ENCODE measurements at regions of chr11 and their contacts with region 1.

Region 1: DNA sequence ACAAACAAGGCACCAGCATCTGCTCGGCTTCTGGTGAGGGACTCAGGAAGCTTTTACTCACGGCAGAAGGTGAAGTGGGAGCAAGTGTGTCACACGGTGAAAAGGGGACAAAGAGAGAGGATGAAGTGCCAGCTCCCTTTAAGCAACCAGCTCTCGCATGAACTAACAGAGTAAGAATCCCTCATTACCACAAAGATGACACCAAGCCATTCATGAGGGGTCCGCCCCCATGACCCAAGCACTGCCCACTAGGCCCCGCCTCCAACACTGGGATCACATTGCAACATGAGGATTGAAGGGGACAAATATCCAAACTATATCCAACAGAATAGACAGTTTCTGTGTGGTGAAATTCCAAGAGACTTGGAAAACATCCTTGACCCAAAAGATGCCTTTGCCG is 198.2 kb upstream of the POU2AF2 start:
- DNase-seq: no peak
- ATAC-seq: no peak
- H3K4me3 ChIP-seq: no peak overlapping the region
- H3K4me3 Mint-ChIP-seq: no peak overlapping the region
- H3K27ac ChIP-seq: no peak overlapping the region
- H3K27ac Mint-ChIP-seq: no peak overlapping the region
- H3K4me1 ChIP-seq: no peaks in the 10 kb centered on the region
- H3K4me1 Mint-ChIP-seq: no peaks in the 10 kb centered on the region
- H3K27me3 ChIP-seq: no peaks in the 10 kb centered on the region
- H3K27me3 Mint-ChIP-seq: peaks cover 3% of the 10 kb centered on the region
- CTCF ChIP-seq: no peak

Region 2: DNA sequence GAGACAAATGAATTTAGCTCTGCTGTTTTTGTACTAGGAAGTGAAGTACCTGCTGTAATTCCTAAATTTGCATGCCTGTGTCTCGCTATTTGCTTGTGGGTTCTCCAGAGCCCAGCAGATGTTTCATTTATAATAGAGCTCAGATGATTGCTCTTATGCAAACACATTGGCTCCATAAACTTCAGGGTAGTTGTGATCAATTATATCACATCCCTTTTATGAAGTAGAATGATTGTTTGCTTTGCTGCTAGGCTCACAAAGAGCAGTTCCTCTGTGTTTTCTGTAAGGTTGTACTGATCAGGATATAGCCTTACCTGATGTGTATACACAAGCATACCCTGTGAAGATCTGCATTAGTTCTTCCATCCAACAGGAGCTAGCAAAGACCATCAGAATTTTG is 1561.2 kb before region 1 on chr11:
- CTCF ChIA-PET with region 1: no interaction called
- POLR2A ChIA-PET with region 1: no interaction called
- intact Hi-C with region 1: loop called in 1 of 2 experiments (anchors 10 kb)
- DNase-seq: no peak
- ATAC-seq: no peak
- H3K4me3 ChIP-seq: no peak overlapping the region
- H3K4me3 Mint-ChIP-seq: no peak overlapping the region
- H3K27ac ChIP-seq: no peak overlapping the region
- H3K27ac Mint-ChIP-seq: no peak overlapping the region
- H3K4me1 ChIP-seq: no peaks in the 10 kb centered on the region
- H3K4me1 Mint-ChIP-seq: no peaks in the 10 kb centered on the region
- H3K27me3 ChIP-seq: no peaks in the 10 kb centered on the region
- H3K27me3 Mint-ChIP-seq: no peaks in the 10 kb centered on the region
- CTCF ChIP-seq: no peak

Region 3: GRCh38 chr11:110991661-110992355 is 55.6 kb before region 1 on chr11:
- CTCF ChIA-PET with region 1: no interaction called
- POLR2A ChIA-PET with region 1: no interaction called
- intact Hi-C with region 1: no loop called
- DNase-seq: no peak
- ATAC-seq: no peak
- H3K4me3 ChIP-seq: no peak overlapping the region
- H3K4me3 Mint-ChIP-seq: no peak overlapping the region
- H3K27ac ChIP-seq: no peak overlapping the region
- H3K27ac Mint-ChIP-seq: no peak overlapping the region
- H3K4me1 ChIP-seq: no peaks in the 10 kb centered on the region
- H3K4me1 Mint-ChIP-seq: no peaks in the 10 kb centered on the region
- H3K27me3 ChIP-seq: no peaks in the 10 kb centered on the region
- H3K27me3 Mint-ChIP-seq: no peaks in the 10 kb centered on the region
- CTCF ChIP-seq: no peak

Region 4: DNA sequence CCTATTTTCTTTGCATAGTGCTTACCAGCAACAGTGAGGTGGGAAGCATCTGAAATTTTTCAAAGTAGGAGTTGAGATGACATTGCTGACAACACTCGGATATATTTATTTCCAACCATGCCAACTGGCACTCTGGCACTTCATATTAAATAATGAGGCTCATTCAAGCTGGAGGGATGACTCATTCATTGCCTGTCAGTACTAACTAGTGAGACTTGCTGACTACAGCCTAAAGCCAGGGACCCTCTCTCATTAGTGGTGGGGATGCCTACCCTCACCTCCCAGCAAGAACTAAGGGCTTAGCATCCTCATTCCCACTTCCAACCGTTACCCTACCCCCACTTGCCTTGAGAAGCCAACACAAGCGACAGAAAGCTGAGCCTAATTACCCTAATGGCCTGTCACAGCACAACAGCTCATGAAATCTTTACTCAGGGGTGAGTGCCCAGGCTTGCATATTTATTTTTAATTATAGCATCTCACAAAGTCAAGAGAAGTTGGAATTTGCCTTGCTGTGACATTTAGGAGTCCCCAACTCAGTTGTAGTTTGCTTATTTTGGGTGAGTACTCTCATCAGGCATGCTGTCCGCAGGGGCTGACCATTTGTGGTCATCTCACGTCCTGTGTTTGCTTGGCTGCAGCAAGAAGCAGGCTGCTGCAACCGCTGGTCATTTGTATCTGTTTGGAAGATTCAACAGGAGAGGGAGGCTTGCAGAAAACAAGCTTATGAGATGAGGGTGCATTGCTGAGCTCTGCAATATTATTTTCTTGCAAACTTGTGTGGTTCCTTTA is 16.5 kb after region 1 on chr11:
- CTCF ChIA-PET with region 1: no interaction called
- POLR2A ChIA-PET with region 1: no interaction called
- intact Hi-C with region 1: no loop called
- DNase-seq: no peak
- ATAC-seq: no peak
- H3K4me3 ChIP-seq: no peak overlapping the region
- H3K4me3 Mint-ChIP-seq: no peak overlapping the region
- H3K27ac ChIP-seq: no peak overlapping the region
- H3K27ac Mint-ChIP-seq: no peak overlapping the region
- H3K4me1 ChIP-seq: no peaks in the 10 kb centered on the region
- H3K4me1 Mint-ChIP-seq: no peaks in the 10 kb centered on the region
- H3K27me3 ChIP-seq: peaks cover 0 to 3% of the 10 kb centered on the region in 2 experiments
- H3K27me3 Mint-ChIP-seq: peaks cover 5% of the 10 kb centered on the region
- CTCF ChIP-seq: no peak